ENCODE measurements at regions of chr1 and their contacts with region 1.

Region 1: DNA sequence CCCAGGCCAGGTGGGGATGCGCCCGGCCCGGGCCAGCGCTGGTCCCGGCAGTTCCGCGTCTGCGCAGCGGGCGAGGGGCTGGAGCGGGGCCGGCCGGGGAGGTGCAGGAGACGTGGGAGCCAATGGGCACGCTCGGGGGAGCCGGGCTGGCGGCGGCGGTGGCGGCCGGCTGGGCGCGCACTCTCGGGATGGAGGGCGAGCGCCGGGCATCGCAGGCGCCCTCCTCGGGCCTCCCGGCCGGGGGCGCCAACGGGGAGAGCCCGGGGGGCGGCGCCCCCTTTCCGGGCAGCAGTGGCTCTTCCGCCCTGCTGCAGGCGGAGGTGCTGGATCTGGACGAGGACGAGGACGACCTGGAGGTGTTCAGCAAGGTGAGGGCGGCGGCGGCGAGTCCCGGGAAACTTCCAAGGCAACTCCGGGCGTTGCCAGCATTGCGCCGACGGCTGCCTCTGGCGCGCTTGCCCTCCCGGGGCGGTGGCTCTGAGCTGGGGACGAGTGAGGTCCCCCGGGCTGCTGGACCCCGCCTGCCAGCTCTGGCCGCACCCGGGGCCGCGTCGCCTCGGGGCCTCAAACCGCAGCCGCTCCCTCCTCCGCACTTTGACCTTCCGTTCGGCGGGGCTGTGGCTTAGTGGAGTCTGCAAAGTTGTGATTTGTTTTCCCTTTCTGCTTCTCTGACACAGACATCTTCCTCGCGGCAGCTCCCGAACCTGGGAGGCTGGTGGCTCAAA is at the start of gene SNX7:
- DNase-seq: peak; percentile 87
- ATAC-seq: peak; percentile 99
- total RNA-seq, gene SNX7: 21.2 TPM

Region 2: DNA sequence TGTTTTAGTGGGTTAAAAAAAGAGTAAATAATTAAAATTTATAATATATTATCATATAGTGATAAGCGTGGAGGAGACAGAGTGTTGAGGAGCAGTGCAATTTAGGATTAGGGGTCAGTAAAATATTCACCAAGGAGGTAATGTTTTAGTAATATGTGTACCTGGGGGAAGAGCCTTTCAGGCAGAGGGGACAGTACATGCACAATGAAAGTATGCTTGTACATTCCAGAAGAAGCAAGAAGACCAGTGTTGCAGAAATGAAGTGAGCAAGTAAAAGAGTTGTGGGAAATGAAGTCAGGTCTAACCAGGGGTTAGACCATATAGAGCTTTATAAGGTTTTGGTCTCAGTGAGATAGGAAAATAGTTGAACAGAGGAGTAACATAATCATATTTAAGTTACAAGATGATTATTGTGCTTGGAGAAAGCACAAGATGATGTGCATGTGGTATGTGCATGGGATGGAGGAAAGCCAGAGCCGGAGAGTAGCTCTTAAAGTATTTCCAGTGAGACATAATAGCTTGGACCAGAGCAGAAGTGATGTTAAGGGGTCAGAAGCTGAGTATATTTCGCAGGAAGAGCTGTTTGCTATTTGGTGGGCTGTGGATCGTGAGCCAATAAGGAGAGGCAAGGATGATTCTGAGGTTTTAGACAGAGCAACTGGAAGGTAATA is 44.6 kb after region 1 on chr1:
- intact Hi-C with region 1: loop called (anchors 5 kb)
- DNase-seq: no peak
- ATAC-seq: no peak

Measured in Right ventricle myocardium inferior (tissue), 1 donor.